SK-N-SH (cell line): ENCODE measurements at regions of chr19 and their contacts with region 1.

Region 1: DNA sequence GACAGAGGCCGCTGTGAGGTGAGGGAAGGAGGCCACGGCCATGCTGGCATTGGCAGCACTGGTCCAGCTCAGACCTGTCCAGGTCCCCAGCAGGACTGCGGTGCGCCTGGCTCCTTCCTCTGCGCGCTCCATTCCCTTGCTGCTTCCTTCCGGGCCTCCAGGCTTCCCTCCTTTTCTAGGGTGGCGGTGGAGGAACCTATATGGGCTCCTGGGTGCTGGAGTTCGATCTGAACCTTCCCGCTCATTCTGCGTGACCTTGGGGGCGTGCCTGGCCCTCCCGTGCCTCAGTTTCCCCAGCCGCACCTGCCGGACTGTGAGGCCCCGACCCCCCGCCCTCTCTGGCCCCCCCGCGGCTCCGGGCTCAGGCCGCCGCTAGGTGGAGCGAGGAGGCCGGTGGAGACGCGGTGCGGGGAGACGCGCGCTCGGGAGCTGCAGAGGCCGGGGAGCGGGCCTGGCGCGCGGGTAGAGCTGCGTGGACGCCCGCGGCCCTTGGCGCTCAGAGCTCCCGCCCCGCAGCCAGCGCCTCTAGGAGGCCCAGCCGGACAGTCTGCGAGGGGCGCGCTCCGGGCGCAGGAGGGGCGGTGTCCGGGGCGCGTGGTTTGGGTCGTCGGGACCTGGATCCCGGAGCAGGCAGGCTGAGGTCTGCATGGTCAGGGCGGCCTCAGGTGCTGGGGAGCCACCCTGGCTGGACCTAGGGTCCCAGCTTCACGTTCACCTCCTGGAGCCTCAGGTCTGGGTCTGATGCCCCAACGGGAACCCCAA is 30.0 kb downstream of the EFNA2 start:
- DNase-seq: peak; percentile 95
- H3K4me3 ChIP-seq: peak overlapping the region in 1 of 2 experiments; percentile 27; a peak in 3 of 4 replicates
- H3K27ac ChIP-seq: no peak overlapping the region
- H3K4me1 ChIP-seq: peaks cover 6 to 7% of the 10 kb centered on the region in 2 experiments; a peak in 2 of 4 replicates
- H3K27me3 ChIP-seq: no peaks in the 10 kb centered on the region
- CTCF ChIP-seq: peak; percentile 64
- EP300 ChIP-seq: no peak
- RAD21 ChIP-seq: peak; percentile 73

Region 2: DNA sequence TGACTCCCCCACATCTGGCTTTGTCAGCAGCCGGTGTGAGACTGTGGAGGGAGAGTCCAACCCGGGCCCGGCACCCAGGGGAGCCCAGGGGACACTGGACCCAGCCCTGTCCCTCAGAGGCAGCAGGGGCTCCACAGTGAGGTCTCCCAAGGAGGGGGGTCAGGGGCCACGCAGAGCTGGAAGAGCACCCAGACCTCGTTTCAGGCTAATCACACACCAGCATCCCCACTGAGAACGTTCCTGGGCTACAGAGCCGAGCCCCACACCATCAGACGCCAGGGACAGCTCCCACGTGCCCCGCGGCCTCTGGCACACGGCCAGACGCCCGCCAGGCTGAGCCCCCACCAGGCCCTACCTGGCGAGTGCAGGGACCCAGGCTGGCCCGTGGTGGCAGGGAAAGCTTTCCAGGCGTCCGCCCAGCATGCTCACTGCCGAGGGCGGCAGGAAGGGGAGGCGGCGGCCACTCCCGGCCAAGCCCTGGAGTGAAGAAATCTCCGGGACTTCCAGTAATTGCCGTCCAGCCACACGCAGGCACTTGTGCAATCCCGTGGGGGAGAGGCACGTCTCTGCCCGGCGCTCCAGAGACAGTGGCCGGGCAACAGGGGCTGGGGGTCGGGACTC is 160.8 kb before region 1 on chr19:
- CTCF ChIA-PET with region 1: no interaction called
- POLR2A ChIA-PET with region 1: no interaction called
- DNase-seq: peak; percentile 86
- H3K4me3 ChIP-seq: no peak overlapping the region
- H3K27ac ChIP-seq: peak overlapping the region in 1 of 2 experiments; percentile 66; a peak in 2 of 4 replicates
- H3K4me1 ChIP-seq: peaks cover 0 to 17% of the 10 kb centered on the region in 2 experiments; a peak in 1 of 4 replicates
- H3K27me3 ChIP-seq: no peaks in the 10 kb centered on the region
- CTCF ChIP-seq: no peak
- EP300 ChIP-seq: no peak
- RAD21 ChIP-seq: no peak

Region 3: GRCh38 chr19:1220452-1221037 is 95.1 kb before region 1 on chr19:
- CTCF ChIA-PET with region 1: no interaction called
- POLR2A ChIA-PET with region 1: no interaction called
- DNase-seq: peak; percentile 61
- H3K4me3 ChIP-seq: no peak overlapping the region
- H3K27ac ChIP-seq: no peak overlapping the region; a peak in 1 of 4 replicates
- H3K4me1 ChIP-seq: peaks cover 8 to 14% of the 10 kb centered on the region in 2 experiments; a peak in 3 of 4 replicates
- H3K27me3 ChIP-seq: no peaks in the 10 kb centered on the region
- CTCF ChIP-seq: peak; percentile 48
- EP300 ChIP-seq: no peak
- RAD21 ChIP-seq: no peak

Region 4: GRCh38 chr19:1304197-1304924 is 11.3 kb before region 1 on chr19:
- CTCF ChIA-PET with region 1: interaction called, 27 read pairs
- POLR2A ChIA-PET with region 1: no interaction called
- DNase-seq: no peak
- H3K4me3 ChIP-seq: no peak overlapping the region
- H3K27ac ChIP-seq: no peak overlapping the region
- H3K4me1 ChIP-seq: no peaks in the 10 kb centered on the region
- H3K27me3 ChIP-seq: no peaks in the 10 kb centered on the region
- CTCF ChIP-seq: no peak
- EP300 ChIP-seq: no peak
- RAD21 ChIP-seq: no peak

Region 5: DNA sequence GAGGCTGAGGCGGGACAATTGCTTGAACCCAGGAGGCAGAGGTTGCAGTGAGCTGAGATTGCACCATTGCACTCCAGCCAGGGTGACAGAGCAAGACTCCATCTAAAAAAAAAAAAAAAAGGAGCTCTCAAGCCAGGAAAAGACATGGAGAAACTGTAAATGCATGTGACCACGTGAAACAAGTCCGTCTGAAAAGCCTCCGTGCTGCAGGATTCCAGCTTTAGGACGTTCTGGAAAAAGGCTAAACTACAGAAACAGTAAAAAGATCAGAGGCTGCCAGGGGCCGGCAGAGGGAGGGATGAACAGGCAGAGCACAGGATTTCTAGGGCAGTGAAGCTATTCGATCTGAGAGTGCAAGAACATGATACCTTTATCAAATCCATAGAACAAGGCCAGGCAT is 27.4 kb after region 1 on chr19:
- CTCF ChIA-PET with region 1: interaction called, 12 read pairs
- POLR2A ChIA-PET with region 1: no interaction called
- DNase-seq: no peak
- H3K4me3 ChIP-seq: no peak overlapping the region
- H3K27ac ChIP-seq: no peak overlapping the region
- H3K4me1 ChIP-seq: no peaks in the 10 kb centered on the region
- H3K27me3 ChIP-seq: no peaks in the 10 kb centered on the region
- CTCF ChIP-seq: no peak
- EP300 ChIP-seq: no peak
- RAD21 ChIP-seq: no peak

Region 6: GRCh38 chr19:1360818-1361461 is 45.3 kb after region 1 on chr19:
- CTCF ChIA-PET with region 1: interaction called, 23 read pairs
- POLR2A ChIA-PET with region 1: no interaction called
- DNase-seq: peak; percentile 97
- H3K4me3 ChIP-seq: peak overlapping the region; percentile 28 to 52
- H3K27ac ChIP-seq: peak overlapping the region; percentile 62 to 92
- H3K4me1 ChIP-seq: peaks cover 25 to 32% of the 10 kb centered on the region in 2 experiments
- H3K27me3 ChIP-seq: no peaks in the 10 kb centered on the region
- CTCF ChIP-seq: no peak
- EP300 ChIP-seq: 0 out of 4 replicates have a peak, but pooled peaks of 1 of the 2 experiments have one; percentile 42
- RAD21 ChIP-seq: peak; percentile 10; the same call in 1 of the 2 replicates

Region 7: DNA sequence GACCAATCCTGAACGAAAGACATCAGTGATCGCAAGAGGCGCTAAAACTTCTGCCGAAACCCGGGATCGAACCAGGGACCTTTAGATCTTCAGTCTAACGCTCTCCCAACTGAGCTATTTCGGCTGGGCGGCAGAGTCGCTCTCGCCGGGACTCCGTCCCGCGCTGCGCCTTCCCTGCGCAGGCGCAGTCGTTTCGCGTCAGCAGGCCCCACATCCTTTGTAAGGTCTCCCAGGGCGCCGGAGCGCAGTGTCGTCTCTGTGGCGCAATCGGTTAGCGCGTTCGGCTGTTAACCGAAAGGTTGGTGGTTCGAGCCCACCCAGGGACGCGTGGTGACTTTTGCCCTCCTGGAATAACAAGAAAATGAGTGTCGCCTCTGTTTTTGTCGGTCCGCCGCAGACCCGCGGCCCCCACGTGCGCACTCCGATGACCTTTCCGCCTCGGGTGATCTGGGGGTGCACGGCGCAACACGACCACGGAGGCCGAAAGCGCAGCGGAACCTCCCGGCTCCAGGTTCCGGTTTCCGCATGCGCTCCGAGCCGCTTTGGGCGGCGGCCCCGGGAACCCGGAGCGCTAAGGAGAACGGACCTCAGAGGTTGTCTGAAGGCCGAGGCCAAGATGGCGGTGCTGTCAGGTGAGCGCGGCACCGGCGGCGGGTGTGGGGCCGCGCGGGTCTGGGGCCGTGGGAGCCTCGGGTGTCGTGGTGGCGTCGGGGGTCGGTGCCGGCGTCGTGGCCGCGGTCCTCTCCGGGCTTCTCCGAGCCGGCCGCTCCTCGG is 67.8 kb after region 1 on chr19 and contains the start of gene NDUFS7:
- CTCF ChIA-PET with region 1: interaction called, 34 read pairs
- POLR2A ChIA-PET with region 1: interaction called, 3 read pairs
- DNase-seq: peak; percentile 90
- H3K4me3 ChIP-seq: peak within 1 kb of the TSS; percentile 83 to 91
- H3K27ac ChIP-seq: peak within 1 kb of the TSS; percentile 62 to 87
- H3K4me1 ChIP-seq: peaks cover 0 to 12% of the 10 kb centered on the region in 2 experiments; a peak in 1 of 4 replicates
- H3K27me3 ChIP-seq: no peaks in the 10 kb centered on the region
- CTCF ChIP-seq: peak; percentile 39; the same call in 1 of the 2 replicates
- EP300 ChIP-seq: peak; percentile 1 to 51; a peak in 2 of 4 replicates
- RAD21 ChIP-seq: no peak
- polyA plus RNA-seq, gene NDUFS7: 52.5 and 66.4 TPM in 2 replicates